ENCODE measurements at regions of chr6 and their contacts with region 1.

Region 1: GRCh38 chr6:137866914-137867684 is at the start of gene TNFAIP3:
- DNase-seq: peak; percentile 90
- H3K4me3 ChIP-seq: peak within 1 kb of the TSS; percentile 89
- H3K27ac ChIP-seq: peak within 1 kb of the TSS; percentile 57
- H3K27me3 ChIP-seq: no peaks in the 10 kb centered on the region
- CTCF ChIP-seq: peak; percentile 60
- polyA plus RNA-seq, gene TNFAIP3: 16.7 and 19.5 TPM in 2 replicates

Region 2: GRCh38 chr6:137717074-137718073 is 149.7 kb before region 1 on chr6:
- CTCF ChIA-PET with region 1: interaction called, 11 read pairs
- POLR2A ChIA-PET with region 1: no interaction called
- DNase-seq: no peak
- H3K4me3 ChIP-seq: no peak overlapping the region
- H3K27ac ChIP-seq: no peak overlapping the region
- H3K27me3 ChIP-seq: no peaks in the 10 kb centered on the region
- CTCF ChIP-seq: no peak

Region 3: DNA sequence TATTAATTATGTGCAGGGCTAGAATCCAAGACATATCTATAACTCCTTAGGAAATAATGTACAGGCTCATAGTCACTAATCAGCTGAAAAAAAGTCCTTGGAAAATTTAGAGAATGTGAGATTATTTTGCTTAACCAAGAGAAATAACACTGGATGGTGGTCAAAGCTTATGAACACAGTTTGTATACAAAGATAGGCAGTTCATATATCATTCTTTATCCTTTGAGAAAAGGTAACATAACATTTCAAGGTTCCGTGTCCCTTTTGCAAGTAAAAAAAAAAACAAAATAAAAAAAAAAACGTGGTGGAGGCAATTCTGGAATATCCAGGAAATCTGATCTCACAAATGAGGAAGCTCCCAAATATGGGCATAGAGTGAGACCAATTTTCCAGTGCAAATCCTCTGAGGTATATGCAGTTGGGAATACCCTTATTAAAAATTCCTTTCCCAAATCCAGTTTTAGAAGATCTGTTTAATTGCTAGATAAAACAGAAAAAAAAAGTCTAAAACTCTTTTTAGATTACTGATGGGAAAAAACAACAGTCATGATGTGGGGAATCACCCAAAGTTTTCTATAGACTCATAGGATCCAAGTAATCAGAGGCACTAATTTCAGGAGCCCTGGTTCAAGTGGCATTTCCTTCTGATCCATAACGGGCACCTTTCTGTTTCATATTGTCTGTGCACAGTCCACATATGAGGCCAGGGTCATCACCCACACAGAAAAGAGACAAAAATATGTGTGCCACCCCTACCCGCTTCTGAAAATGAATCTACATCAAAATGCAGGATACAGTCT is 17.7 kb before region 1 on chr6:
- CTCF ChIA-PET with region 1: interaction called, 16 read pairs
- POLR2A ChIA-PET with region 1: interaction called, 3 read pairs
- DNase-seq: no peak
- H3K4me3 ChIP-seq: no peak overlapping the region; the same call in 1 of the 2 replicates
- H3K27ac ChIP-seq: peak overlapping the region; percentile 62
- H3K27me3 ChIP-seq: no peaks in the 10 kb centered on the region
- CTCF ChIP-seq: no peak

Region 4: GRCh38 chr6:137882225-137882961 is 15.3 kb after region 1 on chr6:
- CTCF ChIA-PET with region 1: interaction called, 18 read pairs
- POLR2A ChIA-PET with region 1: no interaction called
- DNase-seq: no peak
- H3K4me3 ChIP-seq: no peak overlapping the region
- H3K27ac ChIP-seq: no peak overlapping the region
- H3K27me3 ChIP-seq: no peaks in the 10 kb centered on the region
- CTCF ChIP-seq: no peak

Region 5: GRCh38 chr6:137927777-137928218 is 60.7 kb after region 1 on chr6:
- CTCF ChIA-PET with region 1: interaction called, 12 read pairs
- POLR2A ChIA-PET with region 1: no interaction called
- DNase-seq: no peak
- H3K4me3 ChIP-seq: no peak overlapping the region
- H3K27ac ChIP-seq: peak overlapping the region; percentile 48
- H3K27me3 ChIP-seq: peaks cover 2% of the 10 kb centered on the region
- CTCF ChIP-seq: no peak